ENCODE measurements at regions of chr11 and their contacts with region 1.

Region 1: DNA sequence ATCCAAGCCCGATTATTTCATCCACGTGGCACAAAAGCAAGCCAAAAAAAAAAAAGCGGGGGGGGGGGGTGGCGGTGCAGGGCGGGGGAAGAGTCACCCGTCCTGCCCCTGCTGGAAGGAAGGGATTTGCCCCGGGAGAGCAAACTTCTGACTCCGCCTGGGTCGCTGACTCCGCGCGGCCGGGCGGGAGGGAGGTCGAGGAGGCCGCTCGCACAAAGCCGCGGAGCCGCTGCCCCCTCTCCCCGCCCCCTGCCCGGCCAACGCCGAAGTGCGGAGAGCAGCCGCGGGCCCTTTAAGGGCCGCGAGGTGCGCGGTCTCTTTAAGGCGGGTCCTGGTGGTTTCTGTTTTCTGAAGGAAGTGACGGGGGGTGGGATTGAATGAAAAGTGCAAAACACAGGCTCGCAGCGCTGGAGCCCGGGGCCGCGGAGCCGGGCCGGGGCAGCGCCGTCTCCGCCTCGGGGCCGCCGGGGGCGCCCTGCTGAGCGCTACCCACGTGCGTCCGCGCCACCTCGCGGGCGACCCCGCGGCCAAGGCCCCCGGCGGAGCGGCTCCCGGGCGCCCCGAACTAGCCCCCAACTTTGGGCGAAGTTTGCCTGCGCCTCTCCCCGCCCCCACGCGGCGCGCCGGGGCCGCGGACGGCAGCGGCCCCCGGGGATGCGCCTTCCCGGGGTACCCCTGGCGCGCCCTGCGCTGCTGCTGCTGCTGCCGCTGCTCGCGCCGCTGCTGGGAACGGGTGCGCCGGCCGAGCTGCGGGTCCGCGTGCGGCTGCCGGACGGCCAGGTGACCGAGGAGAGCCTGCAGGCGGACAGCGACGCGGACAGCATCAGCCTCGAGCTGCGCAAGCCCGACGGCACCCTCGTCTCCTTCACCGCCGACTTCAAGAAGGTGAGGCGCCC is at the start of gene OAF:
- DNase-seq: peak; percentile 85
- H3K4me3 ChIP-seq: peak within 1 kb of the TSS; percentile 49 to 70 (median 68)
- H3K27ac ChIP-seq: peak within 1 kb of the TSS; percentile 74 to 82 (median 78)
- H3K4me1 ChIP-seq: peaks cover 0 to 33% (median 27%) of the 10 kb centered on the region in 4 donors
- H3K27me3 ChIP-seq: peaks cover 0 to 14% (median 7%) of the 10 kb centered on the region in 3 donors
- CTCF ChIP-seq: peak in 1 of 4 experiments; percentile 19
- EP300 ChIP-seq: no peak
- POLR2A ChIP-seq: no peak
- total RNA-seq, gene OAF: 23.5 to 44.3 (median 41.2) TPM

Region 2: GRCh38 chr11:120178561-120179056 is 32.3 kb before region 1 on chr11:
- intact Hi-C with region 1: loop called (anchors 5 kb)
- DNase-seq: no peak
- H3K4me3 ChIP-seq: no peak overlapping the region
- H3K27ac ChIP-seq: peak overlapping the region in 2 of 4 donors; percentile 31 to 48
- H3K4me1 ChIP-seq: peaks cover 0 to 19% (median 5%) of the 10 kb centered on the region in 4 donors
- H3K27me3 ChIP-seq: no peaks in the 10 kb centered on the region
- CTCF ChIP-seq: no peak
- EP300 ChIP-seq: no peak
- POLR2A ChIP-seq: no peak

Measured in sigmoid colon (tissue), 7 donors.